Astrocyte of the cerebellum (primary cell): ENCODE measurements at regions of chr17 and their contacts with region 1.

Region 1: DNA sequence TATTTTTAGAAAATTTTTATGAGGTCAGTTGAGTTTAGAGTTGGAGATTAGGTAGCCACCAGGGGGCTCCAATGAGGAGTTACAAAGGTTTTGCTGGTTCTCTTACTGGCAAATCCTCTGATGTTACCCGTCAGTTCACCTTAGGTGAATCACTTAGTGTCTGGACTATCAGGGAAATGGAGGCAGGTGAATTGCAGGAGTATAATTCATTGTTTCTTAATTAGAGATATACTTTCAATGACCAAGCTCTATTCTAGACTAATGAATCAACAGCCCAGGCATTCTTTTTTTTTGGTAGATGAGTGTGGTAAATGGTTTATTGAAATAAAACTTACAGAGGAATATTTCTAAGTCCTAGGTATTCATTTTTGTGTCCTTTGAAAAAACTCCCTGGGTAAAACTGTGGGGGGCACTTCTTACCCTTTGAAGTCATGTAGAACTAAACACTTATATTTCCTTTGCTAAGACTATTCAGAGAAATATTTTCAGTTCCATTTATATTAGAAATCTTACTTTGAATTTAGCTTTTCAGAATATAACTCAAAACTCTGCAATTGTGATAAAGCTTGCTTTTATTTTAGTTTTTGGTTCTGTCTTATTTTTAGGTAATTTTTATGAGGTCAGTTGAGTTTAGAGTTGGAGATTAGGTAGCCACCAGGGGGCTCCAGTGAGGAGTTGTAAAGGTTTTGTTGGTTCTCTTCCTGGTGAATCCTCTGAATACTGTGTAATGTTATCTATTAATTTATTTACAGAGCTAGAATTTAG is 17.7 kb downstream of the PSMD11 start:
- DNase-seq: peak; percentile 29
- H3K4me3 ChIP-seq: no peak overlapping the region
- CTCF ChIP-seq: peak; percentile 75

Region 2: DNA sequence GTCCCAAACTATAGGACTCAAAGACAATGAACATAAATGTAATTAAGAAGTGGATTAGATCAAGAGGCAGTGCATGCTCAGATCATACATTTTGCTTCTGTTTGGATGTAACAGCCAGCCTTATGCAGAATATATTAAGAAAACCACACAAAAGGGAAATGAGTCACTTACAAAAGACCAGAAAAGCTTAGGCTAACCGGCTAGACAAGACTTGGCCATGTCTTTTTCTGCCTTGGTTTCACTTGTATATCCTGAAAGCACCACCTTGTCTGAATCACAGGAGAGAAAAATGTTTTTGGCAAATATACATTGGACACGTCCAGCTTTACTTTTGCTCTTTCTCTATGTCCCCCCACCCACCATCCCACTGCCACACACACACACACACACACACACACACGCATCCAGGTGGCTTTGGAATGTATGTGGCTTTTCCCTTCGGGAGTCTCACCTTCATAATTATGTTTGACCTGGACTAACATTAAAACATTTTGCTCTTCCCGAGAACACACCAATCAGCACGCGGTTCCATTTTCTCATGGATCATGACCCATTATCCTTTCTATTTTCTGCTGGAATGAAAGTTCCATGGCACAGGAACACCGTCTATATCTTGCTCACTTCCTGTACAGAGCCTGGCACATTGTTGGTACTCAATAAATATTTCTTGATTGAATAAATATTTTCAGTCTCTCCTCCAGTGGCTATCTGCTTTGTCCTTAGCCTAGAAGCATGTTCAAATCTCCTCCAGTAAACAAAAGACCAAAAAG is 89.3 kb after region 1 on chr17:
- in situ Hi-C with region 1: loop called (anchors 5 kb)
- DNase-seq: peak; percentile 71
- H3K4me3 ChIP-seq: no peak overlapping the region
- CTCF ChIP-seq: no peak

Region 3: DNA sequence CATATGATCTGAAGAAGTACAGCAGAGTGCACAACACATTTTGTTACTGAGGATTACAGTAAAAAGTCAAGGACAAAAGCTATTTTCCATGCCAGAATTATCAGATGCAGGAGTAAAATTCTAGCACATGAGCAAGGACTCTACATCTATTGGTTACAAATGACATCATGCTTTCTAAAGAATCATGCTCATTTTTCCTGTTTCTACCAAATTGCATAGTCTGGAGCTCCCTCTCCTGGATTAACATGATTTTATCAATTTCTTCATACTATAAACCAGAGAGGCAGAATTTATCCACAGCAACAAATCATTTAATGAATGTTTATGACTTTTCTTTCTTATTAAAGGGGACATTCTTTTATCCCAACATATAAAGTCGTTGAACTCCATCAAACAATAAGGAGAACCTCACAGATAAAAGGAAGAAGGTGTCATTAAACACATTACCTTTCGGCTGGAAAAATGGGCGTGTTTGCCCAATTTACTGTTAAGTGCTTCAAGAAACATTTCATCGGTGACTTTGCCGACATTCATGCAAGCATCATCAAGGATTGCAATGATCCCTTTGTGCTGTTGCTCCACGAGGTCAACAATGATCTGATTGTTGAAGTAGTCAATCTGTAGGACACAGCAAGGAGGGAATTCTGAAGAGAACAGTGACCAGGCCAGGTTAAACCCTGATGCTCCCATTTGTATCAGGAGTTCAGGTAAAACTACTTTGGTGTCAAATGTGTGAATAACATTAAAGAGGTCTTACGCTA is 293.2 kb after region 1 on chr17:
- in situ Hi-C with region 1: loop called (anchors 25 kb)
- DNase-seq: peak; percentile 66
- H3K4me3 ChIP-seq: no peak overlapping the region
- CTCF ChIP-seq: peak; percentile 21